ENCODE measurements at regions of chr10 and their contacts with region 1.

Region 1: DNA sequence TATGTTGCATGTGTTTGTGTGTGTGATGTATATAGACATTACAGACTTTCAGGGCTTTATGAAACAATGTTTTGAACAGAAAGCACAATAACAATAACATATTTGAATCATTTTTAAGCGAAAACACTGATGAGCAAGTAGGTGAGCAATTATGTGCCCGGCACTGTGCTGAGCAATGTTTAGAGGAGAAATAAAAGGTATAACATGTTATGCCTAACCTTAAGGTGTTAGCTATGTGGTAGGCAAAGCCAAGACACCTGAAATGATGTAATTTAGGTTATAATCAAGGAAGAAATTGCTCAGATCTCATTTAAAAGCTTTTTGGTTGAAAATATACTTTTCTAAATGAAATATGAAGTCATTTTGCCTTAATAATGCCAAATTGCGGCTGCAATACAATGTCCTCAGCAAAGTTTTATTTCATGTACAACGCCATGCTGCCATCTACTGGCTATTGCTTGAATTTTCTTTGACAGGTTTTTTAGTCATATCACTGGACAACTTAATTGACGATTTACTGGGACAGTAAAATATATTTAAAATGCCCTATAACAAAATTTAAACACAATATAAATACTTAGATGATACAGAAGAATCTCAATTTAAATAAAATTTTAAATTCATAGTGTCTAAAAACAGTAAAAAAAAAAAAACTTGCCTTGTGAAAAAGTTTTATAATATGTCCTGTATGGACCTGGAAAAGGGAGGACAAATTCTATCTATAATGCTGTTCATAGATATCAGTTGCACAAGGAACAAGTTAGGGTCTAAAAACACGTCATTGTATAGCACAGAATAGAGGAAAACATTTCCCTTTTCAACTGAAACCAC is 131.1 kb upstream of the CDK1 start:
- DNase-seq: no peak
- H3K4me3 ChIP-seq: no peak overlapping the region
- H3K27ac ChIP-seq: no peak overlapping the region
- H3K4me1 ChIP-seq: peaks cover 0 to 3% (median 2%) of the 10 kb centered on the region in 4 donors
- H3K27me3 ChIP-seq: no peaks in the 10 kb centered on the region
- CTCF ChIP-seq: peak; percentile 35 to 74 (median 60)
- EP300 ChIP-seq: no peak
- POLR2A ChIP-seq: no peak

Region 2: GRCh38 chr10:59954296-59954695 is 692.9 kb before region 1 on chr10:
- intact Hi-C with region 1: no loop called
- DNase-seq: no peak
- H3K4me3 ChIP-seq: no peak overlapping the region
- H3K27ac ChIP-seq: no peak overlapping the region
- H3K4me1 ChIP-seq: no peaks in the 10 kb centered on the region
- H3K27me3 ChIP-seq: no peaks in the 10 kb centered on the region
- CTCF ChIP-seq: no peak
- EP300 ChIP-seq: no peak
- POLR2A ChIP-seq: no peak

Region 3: GRCh38 chr10:60444494-60445064 is 202.6 kb before region 1 on chr10:
- intact Hi-C with region 1: loop called (anchors 2 kb)
- DNase-seq: no peak
- H3K4me3 ChIP-seq: no peak overlapping the region
- H3K27ac ChIP-seq: no peak overlapping the region
- H3K4me1 ChIP-seq: peaks cover 0 to 27% (median 18%) of the 10 kb centered on the region in 4 donors
- H3K27me3 ChIP-seq: no peaks in the 10 kb centered on the region
- CTCF ChIP-seq: peak; percentile 16 to 68 (median 46)
- EP300 ChIP-seq: no peak
- POLR2A ChIP-seq: no peak

Region 4: GRCh38 chr10:60495338-60496055 is 151.7 kb before region 1 on chr10:
- intact Hi-C with region 1: no loop called
- DNase-seq: no peak
- H3K4me3 ChIP-seq: no peak overlapping the region
- H3K27ac ChIP-seq: no peak overlapping the region
- H3K4me1 ChIP-seq: peaks cover 0 to 16% (median 6%) of the 10 kb centered on the region in 4 donors
- H3K27me3 ChIP-seq: no peaks in the 10 kb centered on the region
- CTCF ChIP-seq: no peak
- EP300 ChIP-seq: no peak
- POLR2A ChIP-seq: no peak

Measured in sigmoid colon (tissue), 7 donors.